ENCODE measurements at regions of chr14 and their contacts with region 1.

Region 1: GRCh38 chr14:35159742-35160409 is 37.5 kb downstream of the PRORP start:
- DNase-seq: no peak
- ATAC-seq: no peak

Region 2: GRCh38 chr14:34895277-34895676 is 264.6 kb before region 1 on chr14:
- intact Hi-C with region 1: no loop called
- DNase-seq: no peak
- ATAC-seq: no peak

Region 3: DNA sequence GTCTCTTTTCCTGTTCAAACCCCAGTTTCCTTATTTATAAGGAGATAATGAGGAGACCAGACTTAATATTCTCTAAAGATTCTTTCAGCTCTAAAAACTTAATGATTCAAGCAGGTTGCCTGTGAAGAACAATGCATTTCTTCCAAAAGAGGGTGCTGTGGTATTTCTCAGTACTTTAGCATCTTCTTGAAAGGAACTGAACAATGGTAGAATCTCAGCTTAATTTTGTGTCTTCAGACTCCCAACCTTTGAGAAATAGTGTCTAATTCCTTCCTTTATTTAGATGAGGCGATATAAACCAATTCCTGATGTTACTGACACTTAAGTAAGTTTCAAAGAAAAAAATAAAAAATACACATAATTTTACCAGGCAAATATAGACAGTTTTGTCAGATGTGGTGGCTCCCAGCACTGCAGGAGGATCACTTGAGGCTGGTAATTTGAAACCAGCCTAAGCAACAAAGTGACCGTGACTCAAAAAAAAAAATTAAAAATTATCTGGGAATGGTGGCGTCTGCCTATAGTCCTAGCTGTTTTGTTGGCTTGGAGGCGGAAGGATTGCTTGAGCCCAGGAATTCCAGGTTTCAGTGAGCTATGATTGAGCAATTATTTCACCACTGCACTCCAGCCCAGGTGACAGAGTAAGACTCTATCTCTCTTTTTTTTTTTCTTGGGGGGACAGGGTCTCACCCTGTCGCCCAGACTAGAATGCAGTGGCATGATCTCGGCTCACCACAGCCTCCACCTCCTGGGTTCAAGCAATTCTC is 55.4 kb after region 1 on chr14:
- intact Hi-C with region 1: loop called (anchors 10 kb)
- DNase-seq: no peak
- ATAC-seq: no peak

Region 4: DNA sequence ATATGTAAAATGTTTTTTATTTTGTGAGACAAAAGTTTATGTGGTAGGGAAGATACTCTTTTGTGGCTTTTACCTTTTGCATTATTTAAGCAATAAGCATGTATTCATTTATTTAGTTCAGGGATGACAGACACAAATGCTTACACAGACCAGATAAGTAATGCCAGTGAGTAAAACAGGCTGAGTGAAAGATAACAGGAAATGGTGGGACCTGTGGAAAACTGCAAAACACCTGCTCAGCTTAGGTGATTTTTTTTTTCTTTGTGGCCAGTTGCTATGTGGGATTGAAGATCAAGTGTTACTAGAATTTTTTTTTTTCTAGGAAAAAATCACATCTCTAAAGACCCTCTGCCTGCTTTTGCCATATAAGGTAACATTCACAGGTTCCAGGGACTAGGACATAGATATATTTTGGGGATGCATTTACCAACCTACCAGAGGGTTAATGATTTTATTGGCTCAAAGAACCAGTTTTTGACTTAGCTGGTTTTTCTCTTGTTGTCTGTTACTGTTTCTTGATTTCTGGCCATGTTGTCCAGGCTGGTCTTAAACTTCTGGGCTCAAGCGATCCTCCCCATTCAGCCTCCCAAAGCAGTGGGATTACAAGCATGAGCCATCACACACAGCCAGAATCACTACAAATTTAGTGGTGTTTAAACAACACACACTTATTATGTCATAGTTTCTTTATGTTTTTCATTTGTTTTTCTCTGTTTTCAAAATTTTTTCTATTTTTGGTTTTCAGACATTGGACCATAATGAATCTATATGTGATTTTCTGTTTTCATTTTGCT is 142.1 kb after region 1 on chr14:
- intact Hi-C with region 1: no loop called
- DNase-seq: no peak
- ATAC-seq: no peak